Activated T-helper 1 cell treated with anti-CD3 and anti-CD28 coated beads, Interleukin-12 subunit alpha, Interleukin-12 subunit beta, Interleukin-2, Interleukin-4 antibody, amounts not matched to agents 30 ng/mL and 10 ng/mL and 1 ng/mL, durations not matched to agents 14 hours and 24 hours and 36 hours (primary cell): ENCODE measurements at regions of chr6 and their contacts with region 1.

Region 1: GRCh38 chr6:137489046-137490005 is 4.9 kb downstream of the OLIG3 start:
- DNase-seq: no peak
- H3K4me3 Mint-ChIP-seq: no peak overlapping the region
- H3K27ac Mint-ChIP-seq: peak overlapping the region; percentile 7
- H3K4me1 Mint-ChIP-seq: peaks cover 14% of the 10 kb centered on the region
- H3K27me3 Mint-ChIP-seq: peaks cover 85% of the 10 kb centered on the region

Region 2: GRCh38 chr6:137341681-137342195 is 147.6 kb before region 1 on chr6:
- intact Hi-C with region 1: loop called (anchors 5 kb)
- DNase-seq: peak; percentile 19
- H3K4me3 Mint-ChIP-seq: peak overlapping the region; percentile 79
- H3K27ac Mint-ChIP-seq: no peak overlapping the region
- H3K4me1 Mint-ChIP-seq: peaks cover 23% of the 10 kb centered on the region
- H3K27me3 Mint-ChIP-seq: peaks cover 28% of the 10 kb centered on the region

Region 3: GRCh38 chr6:137560184-137560563 is 70.8 kb after region 1 on chr6:
- intact Hi-C with region 1: no loop called
- DNase-seq: no peak
- H3K4me3 Mint-ChIP-seq: no peak overlapping the region
- H3K27ac Mint-ChIP-seq: no peak overlapping the region
- H3K4me1 Mint-ChIP-seq: peaks cover 17% of the 10 kb centered on the region
- H3K27me3 Mint-ChIP-seq: peaks cover 7% of the 10 kb centered on the region